MCF 10A (cell line): ENCODE measurements at regions of chr3 and their contacts with region 1.

Region 1: DNA sequence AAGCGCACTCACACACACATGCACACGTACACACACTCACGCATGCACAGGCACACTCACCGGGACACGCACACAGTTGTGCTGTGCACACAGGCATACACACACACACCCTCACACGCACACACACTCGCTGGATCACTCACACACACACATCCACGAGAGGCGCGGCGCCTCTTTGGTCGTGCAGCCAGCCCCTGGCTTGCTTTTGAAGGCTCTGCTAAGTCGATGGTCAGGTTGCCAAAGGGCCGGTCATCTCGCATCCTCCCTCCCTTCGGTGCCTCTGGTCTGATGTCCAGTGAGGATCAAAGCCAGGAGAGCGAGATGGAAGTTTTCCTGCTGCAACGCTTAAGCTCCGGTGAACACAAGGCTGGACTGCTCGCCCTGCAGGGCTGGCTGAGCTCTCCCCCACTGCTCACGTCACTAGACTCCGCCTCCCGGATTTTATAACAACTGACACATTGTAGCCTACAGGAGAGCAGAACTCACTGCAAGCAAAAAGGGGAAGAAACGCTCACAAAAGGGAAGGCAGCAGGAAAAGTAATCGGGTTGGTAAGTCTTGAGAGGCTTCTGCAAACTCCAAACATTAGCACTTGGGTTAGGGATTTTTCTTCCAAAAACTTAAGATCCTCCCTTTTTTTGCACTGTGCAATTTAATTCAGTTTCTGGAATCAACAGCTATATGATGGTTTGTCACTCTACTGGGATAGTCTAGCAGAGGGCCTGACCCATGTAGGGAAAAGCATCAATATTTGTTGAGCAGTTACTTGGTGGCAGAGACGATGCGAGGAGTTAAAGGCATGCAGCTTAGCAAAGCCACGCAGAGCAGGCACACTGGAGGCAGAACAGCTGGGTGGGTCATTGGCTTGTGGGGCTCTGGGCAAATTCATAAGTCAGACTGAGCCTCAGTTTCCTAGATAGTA is at the start of gene SRGAP3:
- DNase-seq: peak; percentile 95
- H3K4me3 Mint-ChIP-seq: peak within 1 kb of the TSS; percentile 88
- H3K27ac Mint-ChIP-seq: peak within 1 kb of the TSS; percentile 47
- H3K4me1 Mint-ChIP-seq: peaks cover 42% of the 10 kb centered on the region
- H3K27me3 Mint-ChIP-seq: peaks cover 3% of the 10 kb centered on the region
- CTCF ChIP-seq: no peak
- total RNA-seq, gene SRGAP3: 13.7 and 19.8 TPM in 2 replicates

Region 2: DNA sequence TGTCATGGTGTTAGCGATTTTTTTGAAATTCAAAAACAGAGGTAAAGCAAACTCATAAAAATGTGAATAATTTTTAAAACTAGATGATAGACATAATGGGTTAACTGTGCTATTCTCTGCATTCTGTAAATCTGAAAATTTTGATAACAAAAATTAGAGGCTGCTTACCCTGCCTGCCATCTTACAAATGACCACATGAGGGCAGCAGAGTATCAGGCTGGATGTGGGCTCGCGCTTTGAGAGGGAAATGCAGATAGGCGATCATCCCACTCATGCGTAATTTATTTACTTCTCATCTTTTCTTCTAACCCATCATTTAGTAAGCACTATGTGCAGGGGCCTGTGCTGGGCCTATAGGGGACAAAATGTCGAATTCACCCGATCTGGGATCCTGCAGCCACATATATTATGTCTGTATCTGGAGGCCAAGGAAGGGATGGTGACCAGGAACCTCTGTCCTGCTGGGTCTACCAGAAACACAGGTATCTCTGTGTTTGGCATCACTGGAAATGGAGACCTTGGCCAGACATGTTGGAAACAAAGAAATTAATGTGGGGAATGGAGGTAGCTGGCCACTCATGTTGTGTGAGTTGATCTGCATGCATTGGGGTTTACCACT is 278.5 kb before region 1 on chr3:
- CTCF ChIA-PET with region 1: interaction called, 10 read pairs
- POLR2A ChIA-PET with region 1: interaction called, 3 read pairs
- intact Hi-C with region 1: no loop called
- DNase-seq: peak; percentile 75
- H3K4me3 Mint-ChIP-seq: no peak overlapping the region
- H3K27ac Mint-ChIP-seq: no peak overlapping the region
- H3K4me1 Mint-ChIP-seq: no peaks in the 10 kb centered on the region
- H3K27me3 Mint-ChIP-seq: peaks cover 10% of the 10 kb centered on the region
- CTCF ChIP-seq: peak; percentile 95

Region 3: GRCh38 chr3:8987645-8988383 is 261.7 kb before region 1 on chr3:
- CTCF ChIA-PET with region 1: interaction called, 11 read pairs
- POLR2A ChIA-PET with region 1: interaction called, 5 read pairs
- intact Hi-C with region 1: loop called (anchors 5 kb)
- DNase-seq: peak; percentile 61
- H3K4me3 Mint-ChIP-seq: no peak overlapping the region
- H3K27ac Mint-ChIP-seq: no peak overlapping the region
- H3K4me1 Mint-ChIP-seq: no peaks in the 10 kb centered on the region
- H3K27me3 Mint-ChIP-seq: no peaks in the 10 kb centered on the region
- CTCF ChIP-seq: peak; percentile 75

Region 4: DNA sequence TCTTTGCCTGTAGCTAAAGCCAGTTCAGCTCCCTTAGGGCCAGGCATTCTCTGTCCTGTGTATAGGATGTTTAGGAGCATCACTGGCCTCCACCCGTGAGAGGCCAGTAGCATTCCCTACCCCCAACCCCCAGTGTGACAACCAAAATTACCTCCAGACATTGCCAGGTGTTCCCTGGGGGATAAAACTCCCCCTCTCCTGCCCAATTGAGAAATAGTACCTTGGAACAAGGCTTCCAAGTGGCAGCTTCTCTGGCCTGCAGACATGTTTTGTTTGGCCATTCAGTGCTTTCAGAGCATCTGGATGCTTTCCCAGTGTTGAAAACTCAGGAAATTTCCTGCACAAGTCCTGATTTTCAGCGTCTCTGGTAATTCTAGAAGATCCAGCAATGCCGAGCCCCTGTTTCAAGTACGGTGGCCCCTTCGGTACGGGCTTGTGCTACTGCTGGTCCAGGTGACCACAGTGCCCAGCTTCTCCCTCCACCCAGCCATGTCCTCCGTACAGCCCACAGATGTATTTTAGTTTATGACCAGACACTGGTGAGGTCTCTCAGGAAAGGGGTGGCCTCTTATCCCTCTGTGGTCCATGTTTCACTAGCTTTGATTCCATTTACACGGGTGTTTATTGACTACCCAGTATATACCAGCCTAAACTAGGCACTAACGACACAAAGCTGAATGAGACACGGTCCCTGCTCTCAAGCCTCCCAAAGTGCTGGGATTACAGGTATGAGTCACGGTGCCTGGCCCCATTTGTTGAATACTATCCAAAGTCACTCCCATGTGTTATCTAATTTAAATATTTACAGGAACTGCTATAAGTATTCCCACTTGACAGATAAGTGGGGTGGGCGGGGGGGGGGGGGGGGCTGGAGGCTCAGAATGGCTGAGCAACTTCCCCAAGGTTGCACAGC is 160.8 kb before region 1 on chr3:
- CTCF ChIA-PET with region 1: interaction called, 5 read pairs
- POLR2A ChIA-PET with region 1: interaction called, 4 read pairs
- intact Hi-C with region 1: loop called (anchors 5 kb)
- DNase-seq: peak; percentile 79
- H3K4me3 Mint-ChIP-seq: peak overlapping the region; percentile 38
- H3K27ac Mint-ChIP-seq: peak overlapping the region; percentile 62
- H3K4me1 Mint-ChIP-seq: peaks cover 25% of the 10 kb centered on the region
- H3K27me3 Mint-ChIP-seq: no peaks in the 10 kb centered on the region
- CTCF ChIP-seq: no peak

Region 5: DNA sequence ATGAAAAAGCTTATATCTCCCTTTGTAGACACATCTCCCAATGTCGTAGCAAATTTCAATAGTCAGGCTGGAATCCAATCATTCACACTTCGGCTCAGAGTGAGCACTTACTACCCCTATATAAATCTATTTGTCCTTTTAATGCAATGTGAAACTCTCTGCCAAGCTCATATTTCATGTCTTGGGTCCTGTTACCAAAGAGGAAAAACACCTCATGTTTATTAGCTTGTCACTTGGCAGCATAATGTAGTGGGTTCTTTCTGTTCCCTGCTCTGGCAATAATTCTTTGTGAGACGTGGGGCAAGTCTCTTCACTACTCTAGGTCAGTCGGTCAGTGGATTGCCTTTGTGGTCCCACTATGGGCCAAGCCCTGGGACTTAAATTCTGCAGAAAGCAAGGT is 107.2 kb before region 1 on chr3:
- CTCF ChIA-PET with region 1: interaction called, 3 read pairs
- POLR2A ChIA-PET with region 1: interaction called, 19 read pairs
- intact Hi-C with region 1: loop called (anchors 5 kb)
- DNase-seq: peak; percentile 71
- H3K4me3 Mint-ChIP-seq: peak overlapping the region; percentile 39
- H3K27ac Mint-ChIP-seq: peak overlapping the region; percentile 89
- H3K4me1 Mint-ChIP-seq: peaks cover 31% of the 10 kb centered on the region
- H3K27me3 Mint-ChIP-seq: no peaks in the 10 kb centered on the region
- CTCF ChIP-seq: no peak

Region 6: DNA sequence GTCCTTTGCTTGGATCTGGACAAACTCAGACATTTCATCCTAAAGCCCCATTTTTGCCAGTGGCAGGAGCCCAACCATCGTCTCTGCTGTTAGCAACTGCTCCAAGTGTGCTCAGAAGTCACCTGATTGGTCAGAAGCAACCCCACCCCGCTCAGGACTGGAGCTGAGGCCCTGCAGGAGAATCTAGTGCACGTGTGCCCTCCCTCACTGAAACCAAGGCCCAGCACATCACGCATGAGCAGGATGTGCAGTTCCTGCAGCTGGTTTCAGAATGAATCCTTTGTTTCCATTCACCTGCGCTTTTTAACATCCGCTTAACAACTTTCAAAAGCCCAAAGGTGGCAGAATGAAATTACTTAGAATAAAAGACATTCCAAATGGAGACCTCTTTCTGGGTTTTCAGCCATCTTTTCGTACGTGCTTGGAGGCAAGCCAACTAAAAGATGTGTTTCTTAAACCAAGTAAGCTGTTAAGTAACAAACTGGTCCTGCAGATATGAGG is 81.2 kb before region 1 on chr3:
- CTCF ChIA-PET with region 1: interaction called, 4 read pairs
- POLR2A ChIA-PET with region 1: interaction called, 13 read pairs
- intact Hi-C with region 1: no loop called
- DNase-seq: no peak
- H3K4me3 Mint-ChIP-seq: no peak overlapping the region
- H3K27ac Mint-ChIP-seq: peak overlapping the region; percentile 84
- H3K4me1 Mint-ChIP-seq: peaks cover 12% of the 10 kb centered on the region
- H3K27me3 Mint-ChIP-seq: no peaks in the 10 kb centered on the region
- CTCF ChIP-seq: no peak

Region 7: DNA sequence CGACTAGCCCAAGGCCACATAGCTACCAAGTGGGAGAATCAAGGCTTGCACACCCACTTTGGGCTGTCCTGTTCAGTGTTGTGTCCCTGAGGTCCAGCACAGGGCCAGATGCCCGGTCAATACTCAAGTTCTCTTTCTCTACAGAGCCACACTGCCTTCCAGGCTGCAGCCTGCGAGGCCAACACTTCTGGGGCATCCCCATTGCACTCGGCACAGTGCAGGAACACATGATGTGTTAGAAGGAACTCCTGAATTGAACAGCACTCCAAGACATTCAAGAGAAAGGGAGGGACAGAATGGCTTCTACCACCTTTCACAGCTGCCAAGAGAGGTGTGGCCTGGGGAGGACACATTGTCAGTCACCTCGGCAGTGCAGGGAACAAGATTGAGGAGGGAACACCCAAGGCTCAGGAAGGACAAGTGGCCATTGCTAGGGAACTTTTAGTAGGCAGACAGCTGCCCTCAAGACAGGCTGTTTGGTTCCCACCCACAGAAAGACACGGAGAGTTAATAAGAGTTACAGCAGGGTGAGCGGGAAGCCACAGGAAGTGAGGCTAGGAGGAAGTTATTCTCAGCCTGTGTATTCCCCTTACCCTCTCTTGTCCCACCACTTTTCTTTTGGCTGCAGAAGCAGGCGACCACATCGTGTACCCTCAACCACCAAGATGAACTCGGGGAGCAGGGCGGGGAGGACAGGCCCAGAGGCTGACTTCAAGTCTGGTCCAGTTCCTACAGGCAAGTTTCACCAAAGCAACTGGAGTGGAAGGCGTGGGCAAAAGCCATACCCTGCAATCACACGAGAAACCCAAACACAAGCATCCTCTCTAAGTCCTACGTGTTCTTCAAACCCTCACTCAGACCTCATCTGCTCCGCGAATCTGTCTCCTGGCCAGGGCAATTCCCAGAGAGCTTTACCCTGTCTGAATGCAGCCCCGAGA is 69.4 kb before region 1 on chr3:
- CTCF ChIA-PET with region 1: no interaction called
- POLR2A ChIA-PET with region 1: interaction called, 7 read pairs
- intact Hi-C with region 1: loop called (anchors 5 kb)
- DNase-seq: no peak
- H3K4me3 Mint-ChIP-seq: no peak overlapping the region
- H3K27ac Mint-ChIP-seq: no peak overlapping the region
- H3K4me1 Mint-ChIP-seq: peaks cover 39% of the 10 kb centered on the region
- H3K27me3 Mint-ChIP-seq: no peaks in the 10 kb centered on the region
- CTCF ChIP-seq: no peak